GM12878 (cell line): ENCODE measurements at regions of chr11 and their contacts with region 1.

Region 1: GRCh38 chr11:111846636-111847035 is 24.7 kb downstream of the ALG9 start:
- DNase-seq: no peak
- ATAC-seq: no peak
- H3K4me3 ChIP-seq: no peak overlapping the region
- H3K27ac ChIP-seq: no peak overlapping the region
- H3K4me1 ChIP-seq: no peaks in the 10 kb centered on the region
- H3K27me3 ChIP-seq: no peaks in the 10 kb centered on the region
- CTCF ChIP-seq: no peak
- EP300 ChIP-seq: no peak
- POLR2A ChIP-seq: no peak
- RAD21 ChIP-seq: no peak

Region 2: DNA sequence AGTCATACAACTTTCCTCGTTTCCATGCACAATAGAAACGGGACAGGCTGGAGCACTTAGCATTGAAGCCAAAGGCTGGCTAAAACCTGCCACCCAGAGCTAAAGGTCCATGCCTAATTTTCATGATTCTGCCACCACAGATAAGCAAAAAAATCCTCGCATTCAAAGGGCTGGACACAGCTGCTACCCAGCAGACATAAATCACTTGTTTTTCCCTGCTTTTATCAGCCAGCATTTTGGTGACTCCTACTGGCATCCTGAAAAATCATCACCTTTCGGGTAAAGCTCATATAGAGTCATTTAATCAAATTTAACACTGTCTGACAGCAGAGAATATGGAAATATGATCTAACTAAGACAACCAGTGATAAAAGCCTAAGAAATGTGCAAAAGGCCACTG is 13.1 kb before region 1 on chr11:
- CTCF ChIA-PET with region 1: interaction called, 34 read pairs
- POLR2A ChIA-PET with region 1: no interaction called
- RAD21 ChIA-PET with region 1: interaction called, 4 read pairs
- SMC1A ChIA-PET with region 1: interaction called, 21 read pairs
- in situ Hi-C with region 1: no loop called
- intact Hi-C with region 1: no loop called
- DNase-seq: no peak
- ATAC-seq: no peak
- H3K4me3 ChIP-seq: no peak overlapping the region
- H3K27ac ChIP-seq: no peak overlapping the region
- H3K4me1 ChIP-seq: peaks cover 20% of the 10 kb centered on the region
- H3K27me3 ChIP-seq: no peaks in the 10 kb centered on the region
- CTCF ChIP-seq: no peak
- EP300 ChIP-seq: no peak
- POLR2A ChIP-seq: no peak
- RAD21 ChIP-seq: no peak